Mucosa of descending colon (tissue), 3 donors: ENCODE measurements at regions of chr14 and their contacts with region 1.

Region 1: DNA sequence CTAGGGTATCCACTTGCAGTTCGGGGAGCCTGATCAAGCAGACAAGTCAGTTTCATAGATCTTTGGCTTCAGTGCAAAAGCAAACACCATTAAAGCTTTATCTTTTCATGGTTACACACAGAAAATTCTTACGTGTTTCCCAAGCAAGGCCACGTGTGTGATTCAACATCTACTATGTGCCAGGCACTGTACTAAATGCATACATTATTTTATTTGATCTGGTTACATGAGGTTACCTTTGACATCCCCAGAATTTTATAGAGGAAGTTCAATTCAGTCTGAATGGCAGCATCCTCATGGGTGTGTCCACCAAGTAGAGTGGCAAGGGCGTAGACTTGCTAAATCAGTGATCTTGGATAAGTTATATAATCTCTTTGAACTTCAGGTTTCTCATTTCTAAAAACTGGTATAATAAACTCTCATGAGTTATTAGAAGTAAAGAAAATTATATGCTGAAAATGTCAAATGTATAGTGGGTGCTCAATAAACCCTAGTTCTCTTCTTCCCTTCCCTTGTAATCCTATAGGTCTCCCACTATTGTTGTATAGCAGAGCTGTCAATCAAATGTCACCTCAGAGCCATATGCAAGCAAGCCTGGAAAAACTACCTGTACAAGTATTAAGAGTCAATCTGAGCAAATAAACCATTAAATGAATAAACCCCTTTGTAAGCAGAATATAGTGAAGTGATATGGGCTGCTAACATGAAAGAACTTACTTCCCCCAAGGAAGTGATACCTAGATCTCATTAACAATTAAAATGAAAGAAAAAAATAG is 50.3 kb upstream of the TMX1 start:
- DNase-seq: peak in 1 of 3 donors; percentile 16
- ATAC-seq: peak; percentile 86
- H3K4me3 ChIP-seq: no peak overlapping the region
- H3K4me1 ChIP-seq: no peaks in the 10 kb centered on the region
- CTCF ChIP-seq: no peak

Region 2: GRCh38 chr14:51094901-51095853 is 94.6 kb before region 1 on chr14 and contains the start of gene TRIM9:
- intact Hi-C with region 1: loop called in 1 of 2 experiments (anchors 10 kb)
- DNase-seq: peak; percentile 95 to 97 (median 96)
- ATAC-seq: peak; percentile 98
- H3K4me3 ChIP-seq: peak within 1 kb of the TSS; percentile 42
- H3K4me1 ChIP-seq: peaks cover 17% of the 10 kb centered on the region
- CTCF ChIP-seq: no peak
- total RNA-seq, gene TRIM9: 0.72 to 8.7 (median 3.9) TPM

Region 3: DNA sequence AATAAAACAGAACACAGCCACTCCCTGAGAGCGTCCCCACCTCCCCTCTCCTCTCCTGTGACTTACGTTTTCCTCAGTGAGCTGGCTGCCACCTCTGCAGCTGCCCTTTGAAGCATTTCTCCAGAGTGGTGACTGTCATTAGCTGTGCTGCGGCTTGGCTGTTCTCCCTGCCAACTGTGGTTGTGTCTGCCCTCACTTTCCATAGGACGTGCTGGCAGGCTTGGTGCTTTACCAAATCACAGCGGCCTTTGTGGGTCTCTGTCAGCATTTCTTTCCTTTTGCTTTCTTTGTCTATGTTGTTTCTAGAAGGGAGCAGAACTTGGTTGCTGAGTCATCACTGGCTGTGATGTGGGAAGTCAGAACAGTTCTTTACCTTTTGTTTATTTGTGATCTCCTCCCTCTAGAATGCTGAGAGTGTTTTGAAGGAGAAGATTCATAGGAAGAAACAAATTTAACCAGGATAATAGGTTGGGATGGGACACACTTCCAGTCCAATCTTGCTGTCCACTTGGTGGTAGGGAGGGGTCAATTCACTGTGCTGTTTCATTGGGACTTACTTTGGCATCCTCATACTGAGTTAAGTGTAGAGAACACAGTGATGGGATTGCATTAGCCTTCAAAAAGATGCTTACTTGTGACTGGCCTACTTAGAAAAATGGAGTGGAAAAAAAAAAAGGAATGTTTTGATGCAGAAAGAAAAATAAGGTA is 138.4 kb after region 1 on chr14:
- intact Hi-C with region 1: no loop called
- DNase-seq: no peak
- ATAC-seq: peak; percentile 12
- H3K4me3 ChIP-seq: no peak overlapping the region
- H3K4me1 ChIP-seq: no peaks in the 10 kb centered on the region
- CTCF ChIP-seq: no peak